IMR-90 (cell line): ENCODE measurements at regions of chr22 and their contacts with region 1.

Region 1: GRCh38 chr22:20156611-20157429 is 6.0 kb upstream of the CCDC188 start:
- DNase-seq: peak; percentile 66
- ATAC-seq: peak; percentile 88
- H3K4me3 ChIP-seq: no peak overlapping the region
- H3K27ac ChIP-seq: no peak overlapping the region
- H3K4me1 ChIP-seq: peaks cover 6% of the 10 kb centered on the region
- H3K27me3 ChIP-seq: peaks cover 13% of the 10 kb centered on the region
- CTCF ChIP-seq: peak; percentile 96
- POLR2A ChIP-seq: peak; percentile 43; the same call in 1 of the 2 replicates
- RAD21 ChIP-seq: peak; percentile 98

Region 2: GRCh38 chr22:20268279-20269012 is 111.6 kb after region 1 on chr22 and contains the start of gene RTN4R:
- CTCF ChIA-PET with region 1: no interaction called
- POLR2A ChIA-PET with region 1: no interaction called
- dilution Hi-C with region 1: no loop called
- in situ Hi-C with region 1: no loop called
- intact Hi-C with region 1: loop called (anchors 2 kb)
- DNase-seq: peak; percentile 19
- ATAC-seq: peak; percentile 96
- H3K4me3 ChIP-seq: peak within 1 kb of the TSS; percentile 20
- H3K27ac ChIP-seq: no peak within 1 kb of the TSS
- H3K4me1 ChIP-seq: no peaks in the 10 kb centered on the region
- H3K27me3 ChIP-seq: peaks cover 27% of the 10 kb centered on the region
- CTCF ChIP-seq: peak; percentile 87
- POLR2A ChIP-seq: no peak
- RAD21 ChIP-seq: peak; percentile 84
- total RNA-seq, gene RTN4R: 0.18 and 0.28 TPM in 2 replicates

Region 3: GRCh38 chr22:20292673-20293232 is 135.9 kb after region 1 on chr22:
- CTCF ChIA-PET with region 1: no interaction called
- POLR2A ChIA-PET with region 1: no interaction called
- dilution Hi-C with region 1: no loop called
- in situ Hi-C with region 1: loop called (anchors 5 kb)
- intact Hi-C with region 1: no loop called
- DNase-seq: no peak
- ATAC-seq: no peak
- H3K4me3 ChIP-seq: no peak overlapping the region
- H3K27ac ChIP-seq: no peak overlapping the region
- H3K4me1 ChIP-seq: no peaks in the 10 kb centered on the region
- H3K27me3 ChIP-seq: peaks cover 62% of the 10 kb centered on the region
- CTCF ChIP-seq: no peak
- POLR2A ChIP-seq: no peak
- RAD21 ChIP-seq: no peak